Heart right ventricle (tissue), 16 donors: ENCODE measurements at regions of chr9 and their contacts with region 1.

Region 1: GRCh38 chr9:111896353-111896958 is at the start of gene UGCG:
- DNase-seq: peak; percentile 85 to 92
- ATAC-seq: peak; percentile 97 to 100 (median 98)
- H3K4me3 ChIP-seq: peak within 1 kb of the TSS; percentile 72 to 95 (median 82)
- H3K27ac ChIP-seq: peak within 1 kb of the TSS; percentile 79 to 98 (median 95)
- H3K4me1 ChIP-seq: peaks cover 0 to 49% (median 39%) of the 10 kb centered on the region in 9 donors
- H3K27me3 ChIP-seq: no peaks in the 10 kb centered on the region
- CTCF ChIP-seq: no peak
- total RNA-seq, gene UGCG: 11.1 to 42.6 (median 13.6) TPM

Region 2: GRCh38 chr9:112065806-112066606 is 169.6 kb after region 1 on chr9:
- intact Hi-C with region 1: loop called in 5 of 10 experiments (anchors 5 to 10 kb)
- DNase-seq: peak in 1 of 2 donors; percentile 30
- ATAC-seq: peak in 3 of 8 donors; percentile 19 to 50 (median 35)
- H3K4me3 ChIP-seq: no peak overlapping the region
- H3K27ac ChIP-seq: peak overlapping the region in 3 of 10 donors; percentile 20 to 35 (median 30)
- H3K4me1 ChIP-seq: peaks cover 0 to 70% (median 13%) of the 10 kb centered on the region in 9 donors
- H3K27me3 ChIP-seq: no peaks in the 10 kb centered on the region
- CTCF ChIP-seq: no peak

Region 3: GRCh38 chr9:112074250-112075008 is 178.0 kb after region 1 on chr9:
- intact Hi-C with region 1: loop called (anchors 2 to 10 kb)
- DNase-seq: peak; percentile 23 to 77
- ATAC-seq: peak; percentile 83 to 92 (median 88)
- H3K4me3 ChIP-seq: peak overlapping the region in 2 of 10 donors; percentile 6
- H3K27ac ChIP-seq: peak overlapping the region in 9 of 10 donors; percentile 48 to 95 (median 72)
- H3K4me1 ChIP-seq: peaks cover 0 to 86% (median 29%) of the 10 kb centered on the region in 9 donors
- H3K27me3 ChIP-seq: no peaks in the 10 kb centered on the region
- CTCF ChIP-seq: peak; percentile 73 to 95 (median 91)

Region 4: DNA sequence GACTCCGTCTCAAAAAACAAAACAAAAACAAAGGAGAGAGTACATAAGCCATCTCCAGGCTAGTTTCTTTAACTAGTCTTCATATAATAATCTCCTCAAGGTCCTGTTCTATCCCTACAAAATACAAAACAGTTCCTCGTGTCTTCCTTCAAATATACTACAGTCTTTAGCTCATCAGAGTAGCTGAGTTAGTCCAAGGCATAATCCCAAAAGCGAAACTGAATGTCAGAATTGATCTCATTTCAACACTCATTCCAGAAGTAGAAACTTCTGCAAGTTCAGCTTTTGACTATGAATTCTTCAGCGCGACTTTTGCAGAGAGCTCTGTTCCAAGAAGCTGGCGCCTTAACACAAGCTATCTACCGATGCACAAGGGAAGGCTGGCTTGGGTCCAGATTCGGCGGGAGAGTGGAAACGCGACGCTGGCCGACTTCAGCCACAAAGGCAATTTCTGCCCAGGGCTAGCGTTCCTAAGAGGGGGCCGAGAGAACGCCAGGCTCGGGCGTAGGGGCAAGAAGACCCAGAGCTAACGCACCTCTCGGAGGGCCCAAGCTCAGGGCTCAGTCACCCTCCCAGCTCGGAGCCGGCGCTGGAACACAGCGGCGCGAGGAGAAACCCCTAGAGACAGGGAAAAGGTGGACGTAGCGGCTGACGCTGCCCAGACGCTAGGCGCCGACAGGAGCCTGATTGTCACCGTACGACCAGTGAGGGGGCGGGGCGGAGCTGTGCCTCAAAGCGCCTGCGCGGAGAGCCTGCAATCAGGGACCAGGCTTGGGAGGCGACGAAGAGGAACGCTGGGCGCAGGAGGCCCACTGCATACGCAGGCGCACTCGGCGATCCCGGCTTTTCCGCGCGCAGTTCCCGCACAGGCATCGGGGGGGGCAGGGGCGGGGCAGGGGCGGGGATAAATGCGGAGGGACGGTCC is 483.0 kb after region 1 on chr9:
- intact Hi-C with region 1: loop called in 1 of 10 experiments (anchors 10 kb)
- DNase-seq: peak; percentile 100
- ATAC-seq: peak; percentile 95 to 99 (median 98)
- H3K4me3 ChIP-seq: peak overlapping the region; percentile 65 to 92 (median 80)
- H3K27ac ChIP-seq: peak overlapping the region; percentile 90 to 99 (median 97)
- H3K4me1 ChIP-seq: peaks cover 0 to 60% (median 51%) of the 10 kb centered on the region in 9 donors
- H3K27me3 ChIP-seq: no peaks in the 10 kb centered on the region
- CTCF ChIP-seq: peak in 2 of 9 donors; percentile 8 to 10